ENCODE measurements at regions of chr21 and their contacts with region 1.

Region 1: DNA sequence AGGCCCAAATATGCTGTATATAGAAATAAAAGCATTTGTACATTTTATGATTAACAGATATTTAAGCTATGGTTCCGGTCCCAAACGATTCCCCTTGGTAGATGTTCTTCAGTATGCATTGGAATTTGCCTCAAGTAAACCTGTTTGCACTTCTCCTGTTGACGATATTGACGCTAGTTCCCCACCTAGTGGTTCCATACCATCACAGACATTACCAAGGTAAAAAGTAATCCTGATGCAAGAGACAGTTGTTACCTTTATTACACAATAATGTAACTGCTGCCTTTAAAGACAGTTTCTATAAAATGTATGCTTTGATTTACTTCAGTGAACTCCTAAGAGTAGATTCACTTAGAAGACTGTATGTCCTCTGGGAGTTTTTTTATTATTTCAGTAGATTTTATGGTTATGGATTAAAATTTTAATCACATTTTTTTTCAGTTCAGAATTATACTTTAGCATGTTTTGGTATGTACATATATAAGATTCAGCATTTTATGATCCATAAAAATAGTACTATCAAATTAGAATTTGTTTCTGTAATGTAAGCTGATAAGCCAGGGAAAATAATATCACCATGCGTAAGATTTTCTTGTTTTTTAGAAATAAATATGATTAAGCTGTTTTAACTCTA is 96.5 kb downstream of the USP25 start:
- DNase-seq: peak; percentile 23
- H3K4me3 Mint-ChIP-seq: no peak overlapping the region
- H3K27ac Mint-ChIP-seq: no peak overlapping the region
- H3K4me1 Mint-ChIP-seq: no peaks in the 10 kb centered on the region
- H3K27me3 Mint-ChIP-seq: no peaks in the 10 kb centered on the region
- CTCF ChIP-seq: peak; percentile 25

Region 2: GRCh38 chr21:15617964-15618363 is 208.3 kb before region 1 on chr21:
- CTCF ChIA-PET with region 1: no interaction called
- intact Hi-C with region 1: loop called (anchors 10 kb)
- DNase-seq: no peak
- H3K4me3 Mint-ChIP-seq: no peak overlapping the region
- H3K27ac Mint-ChIP-seq: no peak overlapping the region
- H3K4me1 Mint-ChIP-seq: no peaks in the 10 kb centered on the region
- H3K27me3 Mint-ChIP-seq: no peaks in the 10 kb centered on the region
- CTCF ChIP-seq: no peak

Measured in Calu3 (cell line).